ENCODE measurements at regions of chr6 and their contacts with region 1.

Region 1: DNA sequence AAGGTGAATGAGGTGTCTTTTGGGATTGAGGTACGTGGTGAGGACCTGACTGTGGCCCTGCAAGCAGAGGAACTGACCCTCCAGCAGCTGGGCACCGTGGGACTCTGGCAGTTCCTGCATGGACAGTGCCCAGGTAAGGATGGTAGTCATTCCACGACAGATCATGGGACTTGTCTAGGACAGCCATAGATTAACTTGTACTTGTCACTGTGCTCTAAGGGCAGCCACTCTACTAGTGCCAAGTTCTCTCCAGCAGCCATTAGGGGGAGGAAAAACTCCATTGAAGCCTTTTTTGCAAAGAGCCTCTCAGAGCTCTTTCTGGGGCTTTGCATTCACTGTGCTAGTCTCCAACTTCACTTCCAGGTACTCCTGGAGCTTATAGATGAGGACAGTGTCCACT is 20.4 kb downstream of the TAF11 start:
- DNase-seq: peak; percentile 10
- ATAC-seq: peak; percentile 58
- H3K4me3 ChIP-seq: no peak overlapping the region
- H3K27ac ChIP-seq: no peak overlapping the region
- H3K4me1 ChIP-seq: peaks cover 21% of the 10 kb centered on the region
- H3K27me3 ChIP-seq: no peaks in the 10 kb centered on the region
- CTCF ChIP-seq: 0 out of 2 replicates have a peak, but pooled peaks have one; percentile 19
- EP300 ChIP-seq: no peak
- POLR2A ChIP-seq: no peak
- RAD21 ChIP-seq: no peak

Region 2: GRCh38 chr6:34696739-34697543 is 170.5 kb before region 1 on chr6 and contains the start of gene ILRUN:
- CTCF ChIA-PET with region 1: no interaction called
- POLR2A ChIA-PET with region 1: no interaction called
- in situ Hi-C with region 1: no loop called
- intact Hi-C with region 1: no loop called
- DNase-seq: peak; percentile 86
- ATAC-seq: peak; percentile 84
- H3K4me3 ChIP-seq: peak within 1 kb of the TSS; percentile 91 to 99 (median 98)
- H3K27ac ChIP-seq: peak within 1 kb of the TSS; percentile 82
- H3K4me1 ChIP-seq: peaks cover 52% of the 10 kb centered on the region
- H3K27me3 ChIP-seq: no peaks in the 10 kb centered on the region; a peak in 1 of 5 replicates
- CTCF ChIP-seq: 0 out of 2 replicates have a peak, but pooled peaks have one; percentile 11
- EP300 ChIP-seq: 0 out of 4 replicates have a peak, but pooled peaks of 1 of the 2 experiments have one; percentile 29
- POLR2A ChIP-seq: peak in 1 of 2 experiments; percentile 80; a peak in 2 of 4 replicates
- RAD21 ChIP-seq: no peak
- total RNA-seq, gene ILRUN: 66.6 and 90.8 TPM in 2 replicates

Region 3: DNA sequence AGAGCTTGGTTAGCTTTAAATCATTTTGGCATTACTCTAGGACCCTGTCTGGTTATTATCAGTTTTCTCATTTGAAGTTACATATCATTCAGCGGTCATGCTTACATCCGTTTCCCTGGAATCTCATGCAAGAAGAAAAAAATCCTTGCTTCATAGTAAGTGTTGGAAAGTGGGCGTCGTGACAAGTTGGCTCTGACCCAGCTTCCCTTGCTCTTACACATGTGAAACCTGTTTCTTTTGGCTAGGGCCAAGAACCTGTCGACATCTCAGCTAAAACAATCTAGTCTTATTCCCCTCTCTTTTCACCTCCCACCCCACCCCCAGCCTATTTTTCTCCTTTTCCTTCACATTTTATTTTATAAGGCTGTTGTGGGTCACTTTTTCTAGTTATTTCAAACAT is 67.0 kb after region 1 on chr6:
- CTCF ChIA-PET with region 1: no interaction called
- POLR2A ChIA-PET with region 1: no interaction called
- in situ Hi-C with region 1: no loop called
- intact Hi-C with region 1: no loop called
- DNase-seq: no peak
- ATAC-seq: no peak
- H3K4me3 ChIP-seq: no peak overlapping the region
- H3K27ac ChIP-seq: no peak overlapping the region
- H3K4me1 ChIP-seq: peaks cover 9% of the 10 kb centered on the region
- H3K27me3 ChIP-seq: no peaks in the 10 kb centered on the region
- CTCF ChIP-seq: no peak
- EP300 ChIP-seq: no peak
- POLR2A ChIP-seq: no peak
- RAD21 ChIP-seq: no peak

Region 4: GRCh38 chr6:35139908-35140655 is 272.6 kb after region 1 on chr6:
- CTCF ChIA-PET with region 1: no interaction called
- POLR2A ChIA-PET with region 1: no interaction called
- in situ Hi-C with region 1: no loop called
- intact Hi-C with region 1: loop called (anchors 10 kb)
- DNase-seq: peak; percentile 64
- ATAC-seq: peak; percentile 50
- H3K4me3 ChIP-seq: peak overlapping the region in 1 of 3 experiments; percentile 31; a peak in 2 of 6 replicates
- H3K27ac ChIP-seq: no peak overlapping the region
- H3K4me1 ChIP-seq: peaks cover 36% of the 10 kb centered on the region
- H3K27me3 ChIP-seq: peaks cover 0 to 5% of the 10 kb centered on the region in 2 experiments; a peak in 1 of 5 replicates
- CTCF ChIP-seq: peak; percentile 92
- EP300 ChIP-seq: no peak
- POLR2A ChIP-seq: no peak
- RAD21 ChIP-seq: peak; percentile 90